Right cardiac atrium (tissue), 5 donors: ENCODE measurements at regions of chr1 and their contacts with region 1.

Region 1: DNA sequence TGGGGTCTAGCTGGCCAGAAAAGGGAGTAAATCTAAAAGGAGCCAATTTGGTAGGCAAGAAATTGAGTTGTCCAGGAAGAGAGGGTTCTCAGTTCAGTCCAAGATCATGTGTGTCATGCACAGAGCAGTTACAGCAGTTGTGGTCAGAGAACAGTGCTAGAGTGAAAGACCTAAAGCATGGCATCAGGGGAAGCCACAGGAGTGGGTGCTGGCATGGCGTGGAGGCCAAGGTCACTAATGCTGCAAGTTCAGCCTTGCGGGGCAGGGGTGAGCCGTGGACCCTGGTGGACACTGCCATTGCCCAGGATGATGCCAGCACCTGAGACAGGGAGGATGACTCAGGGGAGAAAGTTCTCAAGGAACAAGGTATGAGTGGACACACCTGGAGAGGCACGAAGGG is 16.6 kb upstream of the TMEM125 start:
- DNase-seq: no peak
- ATAC-seq: no peak
- H3K4me3 ChIP-seq: no peak overlapping the region
- H3K27ac ChIP-seq: no peak overlapping the region
- H3K4me1 ChIP-seq: peaks cover 3% of the 10 kb centered on the region
- H3K27me3 ChIP-seq: no peaks in the 10 kb centered on the region

Region 2: DNA sequence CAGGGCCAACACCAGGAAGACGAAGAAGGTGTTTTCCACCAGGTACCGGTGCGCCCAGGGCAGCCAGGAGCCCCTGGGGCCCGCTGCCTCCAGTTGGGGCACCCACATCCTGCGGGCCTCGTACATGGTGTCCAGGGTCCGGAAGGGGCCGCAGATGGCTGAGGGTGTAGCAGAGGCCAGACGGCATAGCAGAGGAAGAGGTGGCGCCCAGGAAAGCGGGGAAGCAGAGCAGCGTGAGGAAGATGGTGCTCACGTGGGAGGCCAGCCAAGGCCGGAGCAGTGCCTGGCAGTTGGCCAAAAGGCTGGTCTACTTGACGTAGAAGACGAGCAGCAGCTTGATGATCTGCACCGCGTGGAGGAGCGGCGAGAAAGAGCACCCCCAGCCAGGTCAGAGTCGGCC is 366.4 kb before region 1 on chr1:
- intact Hi-C with region 1: no loop called
- DNase-seq: peak in 2 of 3 donors; percentile 46 to 50
- ATAC-seq: no peak
- H3K4me3 ChIP-seq: no peak overlapping the region
- H3K27ac ChIP-seq: no peak overlapping the region
- H3K4me1 ChIP-seq: no peaks in the 10 kb centered on the region
- H3K27me3 ChIP-seq: no peaks in the 10 kb centered on the region

Region 3: GRCh38 chr1:43152866-43153265 is 100.3 kb before region 1 on chr1:
- intact Hi-C with region 1: no loop called
- DNase-seq: no peak
- ATAC-seq: no peak
- H3K4me3 ChIP-seq: no peak overlapping the region
- H3K27ac ChIP-seq: no peak overlapping the region
- H3K4me1 ChIP-seq: no peaks in the 10 kb centered on the region
- H3K27me3 ChIP-seq: no peaks in the 10 kb centered on the region

Region 4: GRCh38 chr1:43293896-43294760 is 41.0 kb after region 1 on chr1:
- intact Hi-C with region 1: loop called in 1 of 4 experiments (anchors 5 kb)
- DNase-seq: peak in 1 of 3 donors; percentile 27
- ATAC-seq: peak in 1 of 2 donors; percentile 55
- H3K4me3 ChIP-seq: no peak overlapping the region
- H3K27ac ChIP-seq: peak overlapping the region; percentile 31
- H3K4me1 ChIP-seq: peaks cover 7% of the 10 kb centered on the region
- H3K27me3 ChIP-seq: no peaks in the 10 kb centered on the region